ENCODE measurements at regions of chr3 and their contacts with region 1.

Region 1: DNA sequence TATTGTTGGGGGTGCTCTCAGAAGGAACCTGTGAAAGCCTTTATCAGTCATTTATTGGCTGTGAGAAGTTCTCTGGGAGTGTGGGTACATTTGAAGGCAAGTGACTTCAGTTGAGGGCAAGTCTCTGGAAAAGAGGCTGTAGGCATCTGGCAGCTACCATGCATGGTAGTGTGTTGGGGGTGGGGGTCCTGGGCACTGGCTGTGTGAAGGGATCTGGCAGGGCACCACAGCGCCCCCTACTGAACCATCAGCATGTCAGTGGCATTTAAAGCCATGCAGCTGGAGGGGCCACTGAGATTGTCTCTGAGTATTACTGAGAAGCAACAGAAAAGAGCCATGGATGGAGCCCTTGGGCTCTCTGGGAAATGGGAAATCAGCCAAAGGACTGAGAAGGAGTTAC is 30.6 kb downstream of the CRTAP start:
- DNase-seq: peak; percentile 27 to 81
- H3K4me3 ChIP-seq: no peak overlapping the region
- H3K27ac ChIP-seq: no peak overlapping the region
- H3K4me1 ChIP-seq: no peaks in the 10 kb centered on the region
- H3K27me3 ChIP-seq: no peaks in the 10 kb centered on the region
- CTCF ChIP-seq: peak; percentile 86 to 92 (median 86)
- EP300 ChIP-seq: no peak; a peak in 1 of 3 replicates
- POLR2A ChIP-seq: no peak
- RAD21 ChIP-seq: peak; percentile 51 to 68

Region 2: DNA sequence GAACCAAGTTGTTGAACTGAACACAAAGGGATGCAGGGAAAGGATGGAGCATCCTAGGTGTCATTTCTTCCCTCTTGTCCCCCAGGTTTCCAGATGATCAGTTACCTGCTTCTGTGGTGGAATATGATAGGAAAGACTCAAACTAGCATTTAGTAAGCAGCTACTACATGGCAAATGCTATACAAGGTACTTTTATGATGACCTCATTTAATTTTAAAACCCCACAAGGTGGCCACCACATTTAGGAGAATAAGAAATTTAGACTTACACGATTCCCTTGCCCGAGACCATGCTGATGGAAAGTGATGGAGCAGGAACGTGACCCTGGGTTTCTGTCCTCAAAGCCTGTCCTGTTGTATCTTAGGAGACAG is 152.1 kb before region 1 on chr3:
- CTCF ChIA-PET with region 1: no interaction called
- POLR2A ChIA-PET with region 1: no interaction called
- DNase-seq: no peak
- H3K4me3 ChIP-seq: no peak overlapping the region
- H3K27ac ChIP-seq: no peak overlapping the region
- H3K4me1 ChIP-seq: no peaks in the 10 kb centered on the region
- H3K27me3 ChIP-seq: no peaks in the 10 kb centered on the region
- CTCF ChIP-seq: no peak
- EP300 ChIP-seq: no peak
- POLR2A ChIP-seq: no peak
- RAD21 ChIP-seq: no peak

Region 3: DNA sequence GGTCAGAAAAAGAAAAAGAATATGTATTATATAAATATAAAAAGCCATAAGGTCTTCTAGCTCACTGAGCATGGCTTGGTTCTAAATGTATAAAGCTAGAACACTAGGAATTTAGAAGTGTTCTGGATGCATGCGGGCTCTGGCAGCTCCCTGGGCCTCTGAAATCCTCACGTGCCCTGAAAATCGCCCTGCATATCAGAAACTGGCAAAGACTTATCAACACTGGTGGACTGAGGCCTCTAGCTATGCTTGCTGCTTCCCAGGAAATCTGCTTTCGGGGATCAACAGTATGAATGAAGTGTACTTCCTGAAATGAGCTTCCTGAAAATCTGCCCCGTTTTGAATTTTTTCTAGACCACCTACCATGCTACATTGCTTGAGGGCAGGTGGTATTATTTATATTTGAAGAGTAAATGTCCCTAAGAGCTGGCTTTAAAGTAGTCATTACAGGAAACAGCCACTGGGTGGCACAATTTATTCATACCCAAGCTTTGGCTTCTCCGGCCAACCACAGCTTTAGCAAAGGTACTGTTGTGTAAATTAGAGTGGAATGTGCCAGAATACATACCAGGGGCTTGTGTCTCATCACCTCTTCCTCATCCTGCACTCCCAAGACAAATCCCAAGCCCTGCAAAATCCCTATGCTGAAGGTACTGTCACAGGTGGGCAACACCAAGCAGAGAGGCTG is 13.0 kb before region 1 on chr3:
- CTCF ChIA-PET with region 1: interaction called, 43 read pairs
- POLR2A ChIA-PET with region 1: interaction called, 4 read pairs
- DNase-seq: peak; percentile 41 to 64
- H3K4me3 ChIP-seq: no peak overlapping the region
- H3K27ac ChIP-seq: no peak overlapping the region
- H3K4me1 ChIP-seq: peaks cover 0 to 6% (median 5%) of the 10 kb centered on the region in 4 experiments; a peak in 6 of 7 replicates
- H3K27me3 ChIP-seq: no peaks in the 10 kb centered on the region
- CTCF ChIP-seq: peak in 2 of 3 experiments; percentile 68 to 70; a peak in 3 of 4 replicates
- EP300 ChIP-seq: no peak
- POLR2A ChIP-seq: no peak
- RAD21 ChIP-seq: peak; percentile 90 to 91

Region 4: GRCh38 chr3:33159234-33159633 is 14.8 kb after region 1 on chr3:
- CTCF ChIA-PET with region 1: interaction called, 10 read pairs
- POLR2A ChIA-PET with region 1: no interaction called
- DNase-seq: no peak
- H3K4me3 ChIP-seq: no peak overlapping the region
- H3K27ac ChIP-seq: no peak overlapping the region; the same call in 1 of the 2 replicates
- H3K4me1 ChIP-seq: no peaks in the 10 kb centered on the region
- H3K27me3 ChIP-seq: no peaks in the 10 kb centered on the region
- CTCF ChIP-seq: no peak
- EP300 ChIP-seq: no peak
- POLR2A ChIP-seq: no peak
- RAD21 ChIP-seq: no peak

Region 5: DNA sequence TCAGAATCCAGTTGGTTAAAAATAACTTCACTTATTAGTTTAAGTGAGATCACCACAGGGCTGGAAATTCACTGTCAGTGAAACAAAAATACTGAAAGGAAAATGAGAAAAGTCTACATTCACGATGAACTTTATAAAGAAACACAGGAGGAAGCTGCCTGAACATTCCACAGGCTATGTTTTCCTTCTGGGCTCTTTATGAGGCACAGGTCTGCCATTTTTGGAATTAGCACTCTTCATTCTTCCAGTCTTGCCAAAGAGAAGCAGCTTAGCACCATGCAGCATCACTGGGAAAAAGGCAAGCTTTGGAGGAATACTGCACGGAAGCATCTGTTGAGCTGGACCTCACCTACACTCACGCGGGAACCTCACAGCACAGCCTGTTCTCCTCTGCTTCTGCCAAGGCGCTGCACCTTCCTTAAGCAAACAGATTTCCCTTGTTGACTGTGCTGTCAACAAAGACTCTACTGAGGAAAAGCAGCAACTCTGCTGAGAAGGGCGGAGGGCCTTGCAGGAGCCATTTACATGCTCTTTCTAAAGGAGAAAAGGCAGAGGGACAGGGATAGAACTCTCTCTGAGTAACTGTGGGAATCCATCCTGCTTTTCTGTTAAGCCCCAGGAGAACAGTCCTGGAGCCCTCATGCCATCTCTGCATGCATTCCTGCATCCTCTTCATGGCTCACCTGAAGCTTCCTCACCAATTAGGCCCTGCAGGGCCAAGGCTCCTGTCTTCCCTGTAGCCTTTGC is 58.5 kb after region 1 on chr3:
- CTCF ChIA-PET with region 1: interaction called, 12 read pairs
- POLR2A ChIA-PET with region 1: no interaction called
- DNase-seq: no peak
- H3K4me3 ChIP-seq: no peak overlapping the region
- H3K27ac ChIP-seq: no peak overlapping the region
- H3K4me1 ChIP-seq: no peaks in the 10 kb centered on the region
- H3K27me3 ChIP-seq: no peaks in the 10 kb centered on the region
- CTCF ChIP-seq: no peak
- EP300 ChIP-seq: no peak
- POLR2A ChIP-seq: no peak
- RAD21 ChIP-seq: no peak